ENCODE measurements at regions of chr12 and their contacts with region 1.

Region 1: DNA sequence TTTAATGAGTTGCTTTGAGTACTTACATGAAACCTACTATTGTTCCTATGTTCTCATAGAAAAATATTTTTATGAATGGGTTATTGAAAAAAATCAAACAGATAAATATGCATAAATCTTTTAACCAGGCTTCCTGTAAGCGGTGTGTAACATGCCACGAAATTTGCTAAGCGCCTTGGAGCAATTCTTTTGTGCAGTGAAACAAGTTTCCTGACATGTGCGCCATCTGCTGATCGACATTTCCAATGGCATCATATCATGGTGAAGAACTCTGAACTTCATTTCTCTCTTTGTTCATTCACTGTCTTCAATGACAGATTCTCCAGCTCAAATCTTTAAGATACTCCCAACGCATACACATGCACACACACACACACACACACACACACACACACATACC is 145.6 kb upstream of the NAV3 start:
- DNase-seq: peak; percentile 29
- ATAC-seq: peak; percentile 61

Region 2: DNA sequence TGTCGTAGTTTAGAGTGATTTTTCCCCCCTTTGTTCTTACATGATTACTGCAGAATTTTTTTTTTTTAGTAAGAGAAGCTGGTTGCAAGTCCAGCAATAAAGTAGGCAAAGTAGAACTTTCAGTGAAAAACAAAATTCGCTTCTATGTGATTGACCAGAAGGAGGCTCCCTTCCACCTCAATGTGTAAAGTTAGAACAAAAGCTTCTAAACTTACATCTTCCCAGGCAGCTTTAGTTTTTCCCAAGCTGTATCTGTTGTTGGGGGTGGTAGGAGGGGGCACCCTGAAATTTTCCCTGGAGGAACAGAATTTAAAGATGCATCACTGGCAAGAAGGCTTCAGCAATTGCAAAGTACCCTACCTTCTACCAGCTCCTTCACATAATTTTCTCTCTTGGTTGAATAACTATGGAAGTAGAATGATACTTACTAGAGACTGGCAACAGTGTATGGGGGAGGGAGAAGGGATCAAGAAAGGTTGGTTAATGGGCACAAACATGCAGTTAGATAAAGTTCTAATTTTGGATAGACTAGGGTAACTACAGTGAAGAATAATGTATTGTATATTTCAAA is 532.4 kb before region 1 on chr12:
- intact Hi-C with region 1: loop called (anchors 5 kb)
- DNase-seq: no peak
- ATAC-seq: no peak

Region 3: GRCh38 chr12:77777274-77777673 is 92.2 kb after region 1 on chr12:
- intact Hi-C with region 1: no loop called
- DNase-seq: no peak
- ATAC-seq: no peak

Measured in left ventricle myocardium superior (tissue), 1 donor.